Activated naive CD4-positive, alpha-beta T cell treated with anti-CD3 and anti-CD28 coated beads, Interleukin-2, amount 10 ng/mL, durations not matched to agents 7 days and 5 days (primary cell): ENCODE measurements at regions of chr2 and their contacts with region 1.

Region 1: DNA sequence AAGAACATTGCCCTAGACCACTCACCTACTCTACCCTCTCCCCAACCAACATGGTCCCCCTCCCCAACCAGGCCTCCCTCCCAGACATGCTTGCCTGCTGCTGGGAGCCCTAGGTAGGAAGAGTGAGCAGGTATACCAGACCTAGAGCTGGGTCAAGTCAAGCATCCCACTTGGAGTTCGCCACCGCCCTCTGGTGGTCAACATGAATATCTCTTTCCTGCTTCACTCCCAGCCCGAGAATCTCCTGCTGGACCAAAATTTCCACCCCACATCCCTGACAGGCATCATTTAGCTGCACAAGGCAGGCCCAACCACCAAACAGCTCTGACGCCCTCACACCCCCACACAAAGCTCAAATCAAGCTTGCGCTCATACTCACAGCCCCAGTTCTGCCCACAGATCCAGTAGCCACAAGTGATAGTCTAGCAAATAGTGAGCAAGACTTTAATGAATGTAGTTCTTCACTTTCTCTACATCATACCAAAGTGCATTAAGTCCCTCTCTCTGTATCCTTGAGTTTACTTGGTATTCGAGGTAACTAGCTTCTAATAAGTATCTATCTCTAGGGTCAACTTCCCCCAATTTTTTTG is 116.0 kb downstream of the TNS1 start:
- DNase-seq: peak; percentile 79
- H3K4me3 Mint-ChIP-seq: no peak overlapping the region
- H3K27ac Mint-ChIP-seq: no peak overlapping the region
- H3K4me1 Mint-ChIP-seq: no peaks in the 10 kb centered on the region
- H3K27me3 Mint-ChIP-seq: peaks cover 16% of the 10 kb centered on the region

Region 2: DNA sequence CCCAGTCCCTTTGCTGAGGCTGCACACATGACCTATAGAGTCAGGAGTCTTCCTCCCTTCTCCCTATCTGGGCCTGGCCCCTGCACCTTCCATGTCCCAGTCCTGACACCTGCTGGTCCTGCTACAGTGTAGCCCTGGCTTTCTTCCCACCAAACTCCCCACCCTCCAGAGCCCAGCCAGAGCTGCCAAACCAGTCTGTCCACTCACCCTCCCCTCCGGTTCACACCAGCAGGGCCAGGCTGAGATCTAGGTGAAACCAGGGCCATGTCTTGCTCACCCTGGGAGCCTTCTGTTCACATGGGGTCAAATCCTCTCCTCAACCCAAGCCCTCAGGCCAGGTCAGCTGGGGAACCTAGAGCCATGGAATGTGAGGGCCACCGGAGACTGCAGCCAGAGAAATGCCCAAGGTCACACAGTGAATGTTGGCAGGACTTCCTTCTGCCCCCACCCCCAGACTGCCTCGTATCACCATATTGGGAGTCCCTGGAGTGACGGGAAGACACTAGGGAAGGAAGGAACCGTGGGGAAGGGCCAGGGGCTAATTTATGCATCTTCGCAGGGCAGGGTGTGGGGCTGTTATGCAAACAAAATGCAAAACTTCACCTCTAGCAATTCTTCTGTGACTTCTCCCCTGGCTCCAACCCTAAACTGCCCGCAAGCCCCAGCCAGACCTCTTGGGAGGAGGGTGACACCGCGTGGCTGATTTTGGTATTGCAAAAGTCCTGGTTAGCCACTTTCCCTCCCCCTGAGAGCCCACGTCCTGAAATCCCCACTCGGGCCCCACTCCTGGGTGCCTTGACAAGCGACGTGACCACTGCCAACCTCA is 101.4 kb after region 1 on chr2:
- CTCF ChIA-PET with region 1: interaction called, 12 read pairs
- DNase-seq: peak; percentile 82
- H3K4me3 Mint-ChIP-seq: no peak overlapping the region
- H3K27ac Mint-ChIP-seq: peak overlapping the region; percentile 28
- H3K4me1 Mint-ChIP-seq: no peaks in the 10 kb centered on the region
- H3K27me3 Mint-ChIP-seq: peaks cover 15% of the 10 kb centered on the region

Region 3: GRCh38 chr2:218093879-218094278 is 207.1 kb after region 1 on chr2:
- CTCF ChIA-PET with region 1: no interaction called
- DNase-seq: no peak
- H3K4me3 Mint-ChIP-seq: no peak overlapping the region
- H3K27ac Mint-ChIP-seq: no peak overlapping the region
- H3K4me1 Mint-ChIP-seq: no peaks in the 10 kb centered on the region
- H3K27me3 Mint-ChIP-seq: peaks cover 19% of the 10 kb centered on the region